Mammary epithelial cell (primary cell): ENCODE measurements at regions of chr6 and their contacts with region 1.

Region 1: GRCh38 chr6:3039384-3039783 is 28.9 kb upstream of the RIPK1 start:
- DNase-seq: no peak
- H3K4me3 ChIP-seq: no peak overlapping the region
- H3K27ac ChIP-seq: no peak overlapping the region
- H3K4me1 ChIP-seq: no peaks in the 10 kb centered on the region
- H3K27me3 ChIP-seq: peaks cover 2% of the 10 kb centered on the region
- CTCF ChIP-seq: no peak

Region 2: GRCh38 chr6:2940010-2940850 is 99.2 kb before region 1 on chr6:
- CTCF ChIA-PET with region 1: no interaction called
- dilution Hi-C with region 1: loop called (anchors 5 kb)
- in situ Hi-C with region 1: no loop called
- intact Hi-C with region 1: no loop called
- DNase-seq: no peak
- H3K4me3 ChIP-seq: no peak overlapping the region
- H3K27ac ChIP-seq: no peak overlapping the region
- H3K4me1 ChIP-seq: no peaks in the 10 kb centered on the region
- H3K27me3 ChIP-seq: peaks cover under 1% of the 10 kb centered on the region
- CTCF ChIP-seq: no peak

Region 3: DNA sequence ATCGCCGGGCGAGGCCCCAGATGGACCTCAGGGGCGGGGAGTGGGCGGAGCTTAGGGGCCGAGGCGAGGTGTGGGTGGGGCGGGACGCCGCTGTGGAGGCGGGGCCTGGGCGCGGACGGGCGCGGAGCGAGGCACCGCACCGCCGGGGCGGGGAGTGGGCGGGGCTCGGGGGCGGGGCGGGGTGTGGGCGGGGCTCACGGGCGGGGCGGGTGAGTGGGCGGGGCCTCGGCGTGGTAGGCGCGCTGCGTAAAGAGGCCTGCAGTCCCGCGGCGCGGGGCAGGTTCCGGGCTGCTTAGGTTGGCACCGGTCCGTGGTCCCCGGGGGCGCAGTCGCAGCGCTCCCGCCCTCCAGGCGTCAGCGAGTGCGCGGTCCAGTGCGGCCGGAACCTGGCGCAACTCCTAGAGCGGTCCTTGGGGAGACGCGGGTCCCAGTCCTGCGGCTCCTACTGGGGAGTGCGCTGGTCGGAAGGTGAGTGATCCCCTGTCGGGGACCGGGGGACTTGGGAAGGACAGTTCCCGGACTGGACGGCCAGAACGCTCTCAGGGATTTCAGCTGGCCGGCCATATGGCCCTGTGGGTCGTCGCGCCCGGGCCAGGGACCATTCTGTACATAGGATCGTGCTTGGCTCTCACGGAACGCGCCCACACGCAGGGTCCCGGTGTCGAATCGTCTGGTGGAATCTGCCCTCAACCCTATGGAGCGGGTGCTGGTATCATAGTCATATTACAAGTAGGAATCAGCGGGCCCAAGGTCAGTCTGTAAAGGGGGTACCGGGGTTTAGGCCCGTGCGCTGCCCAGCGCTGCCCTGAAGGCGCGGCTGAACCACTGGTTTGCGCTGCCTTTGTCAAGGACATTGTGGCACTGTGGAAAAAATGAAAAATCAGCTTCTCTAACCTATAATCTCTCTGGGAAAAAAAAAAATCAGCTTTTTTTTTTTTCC is 39.5 kb before region 1 on chr6 and contains the start of gene NQO2:
- CTCF ChIA-PET with region 1: interaction called, 5 read pairs
- dilution Hi-C with region 1: loop called (anchors 5 kb)
- in situ Hi-C with region 1: no loop called
- intact Hi-C with region 1: no loop called
- DNase-seq: no peak
- H3K4me3 ChIP-seq: peak within 1 kb of the TSS; percentile 62 to 94 (median 80)
- H3K27ac ChIP-seq: peak within 1 kb of the TSS; percentile 47
- H3K4me1 ChIP-seq: peaks cover 22% of the 10 kb centered on the region
- H3K27me3 ChIP-seq: no peaks in the 10 kb centered on the region
- CTCF ChIP-seq: peak in 1 of 2 donors; percentile 6
- total RNA-seq, gene NQO2: 17.0 to 20.3 TPM

Region 4: DNA sequence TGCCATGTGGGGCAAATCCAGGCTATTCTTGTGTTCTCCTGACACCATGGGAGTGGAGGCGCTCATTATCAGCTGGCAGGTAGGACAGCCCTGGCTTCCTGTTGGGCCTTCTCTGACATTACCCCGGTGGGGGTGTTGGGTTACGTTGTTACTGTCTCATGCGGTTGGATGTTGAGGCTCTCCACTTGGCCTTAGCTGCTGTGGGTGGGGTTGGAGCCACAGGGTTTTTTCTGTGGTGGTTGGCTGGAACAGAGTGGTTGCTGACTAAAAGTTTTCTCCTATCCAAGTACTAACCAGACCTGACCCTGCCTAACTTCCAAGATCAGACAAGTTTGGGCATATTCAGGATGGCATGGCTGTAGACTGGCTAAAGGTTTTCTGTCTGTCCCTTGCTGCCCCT is 49.1 kb after region 1 on chr6:
- CTCF ChIA-PET with region 1: no interaction called
- dilution Hi-C with region 1: loop called (anchors 5 kb)
- in situ Hi-C with region 1: no loop called
- intact Hi-C with region 1: no loop called
- DNase-seq: peak; percentile 76
- H3K4me3 ChIP-seq: no peak overlapping the region
- H3K27ac ChIP-seq: peak overlapping the region; percentile 45
- H3K4me1 ChIP-seq: peaks cover 14% of the 10 kb centered on the region
- H3K27me3 ChIP-seq: no peaks in the 10 kb centered on the region
- CTCF ChIP-seq: no peak

Region 5: DNA sequence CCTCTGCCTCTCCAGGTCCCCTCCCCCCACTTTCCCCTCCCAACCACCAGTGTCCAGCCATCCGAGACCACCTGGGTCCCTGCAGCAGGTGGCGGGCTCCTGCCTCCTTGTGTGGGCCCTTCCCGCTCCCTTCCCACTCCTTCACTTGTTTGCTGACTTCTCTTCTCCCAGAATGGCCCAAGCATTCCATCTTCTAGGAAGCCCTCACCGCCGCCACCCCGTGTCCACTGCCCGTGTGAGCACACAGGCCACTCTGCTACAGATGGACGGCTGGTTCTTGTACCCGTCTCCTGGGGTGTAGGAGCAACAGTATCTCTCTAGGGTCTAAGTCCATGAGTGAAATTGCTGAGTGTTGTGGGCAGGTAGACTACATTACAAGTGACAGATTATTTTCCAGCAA is 94.1 kb after region 1 on chr6:
- CTCF ChIA-PET with region 1: no interaction called
- dilution Hi-C with region 1: loop called (anchors 5 kb)
- in situ Hi-C with region 1: no loop called
- intact Hi-C with region 1: no loop called
- DNase-seq: no peak
- H3K4me3 ChIP-seq: no peak overlapping the region
- H3K27ac ChIP-seq: no peak overlapping the region
- H3K4me1 ChIP-seq: peaks cover 4% of the 10 kb centered on the region
- H3K27me3 ChIP-seq: no peaks in the 10 kb centered on the region
- CTCF ChIP-seq: no peak